ENCODE measurements at regions of chr3 and their contacts with region 1.

Region 1: DNA sequence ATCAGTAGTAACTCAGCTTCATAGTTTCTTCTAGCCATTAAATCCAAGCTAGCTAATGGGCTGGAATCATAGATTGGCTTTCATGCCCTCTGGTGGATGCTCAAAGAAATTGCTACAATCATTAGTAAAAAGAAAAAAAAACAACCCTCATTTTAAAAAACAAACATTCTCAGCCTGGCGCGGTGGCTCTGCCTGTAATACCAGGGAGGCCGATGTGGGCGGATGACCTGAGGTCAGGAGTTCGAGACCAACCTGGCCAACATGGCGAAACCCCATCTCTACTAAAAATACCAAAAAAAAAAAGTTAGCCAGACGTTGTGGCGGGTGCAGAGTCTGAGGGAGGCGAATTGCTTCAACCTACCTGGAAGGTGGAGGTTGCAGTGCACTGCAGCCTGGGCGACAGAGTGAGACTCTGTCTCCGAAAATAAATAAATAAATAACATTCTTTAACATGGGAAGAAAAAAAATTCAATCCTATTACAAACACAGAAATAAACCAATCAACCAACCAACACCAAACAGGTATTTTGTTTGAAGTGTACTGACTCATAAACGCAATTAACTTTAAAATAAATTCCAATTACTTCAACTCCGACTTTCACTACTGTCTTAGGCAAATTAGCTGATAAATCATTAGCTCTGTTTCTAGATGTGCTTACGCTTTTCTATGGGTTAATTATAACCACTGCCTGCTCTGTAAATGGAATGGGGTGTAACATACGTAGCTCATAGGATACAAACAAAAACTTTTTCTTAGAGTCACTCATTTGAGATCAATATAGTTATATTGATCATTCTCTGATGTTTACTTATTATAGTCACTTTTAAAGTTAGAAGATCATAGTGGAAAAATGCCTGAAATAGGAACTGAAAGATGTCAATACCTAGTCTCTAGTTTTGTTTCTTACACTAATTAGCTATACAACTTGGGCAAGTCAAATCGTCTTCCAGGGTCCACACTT is 24.9 kb downstream of the TMEM207 start:
- DNase-seq: no peak
- H3K4me3 ChIP-seq: no peak overlapping the region
- CTCF ChIP-seq: peak; percentile 54

Region 2: GRCh38 chr3:190217081-190217480 is 207.7 kb before region 1 on chr3:
- CTCF ChIA-PET with region 1: interaction called, 154 read pairs
- POLR2A ChIA-PET with region 1: no interaction called
- DNase-seq: no peak
- H3K4me3 ChIP-seq: no peak overlapping the region
- CTCF ChIP-seq: no peak

Region 3: DNA sequence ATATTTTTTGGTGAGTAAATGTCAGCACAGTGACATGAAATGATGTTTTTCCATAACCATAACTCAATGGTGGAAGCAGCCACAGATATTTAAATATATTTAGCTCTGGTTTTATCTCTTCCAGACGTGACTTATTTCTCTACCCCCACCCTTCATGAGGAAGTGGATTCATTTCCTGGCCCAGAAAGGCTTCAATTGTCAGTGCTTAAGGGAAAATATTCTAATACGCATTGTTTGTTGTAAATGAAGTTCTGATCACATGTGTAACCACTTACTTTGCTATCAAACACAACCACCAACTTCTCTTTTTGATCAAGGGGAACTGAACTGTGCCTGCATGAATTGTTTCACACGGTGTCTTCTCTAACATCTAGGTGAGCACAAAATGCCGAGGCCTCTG is 22.8 kb before region 1 on chr3:
- CTCF ChIA-PET with region 1: interaction called, 11 read pairs
- POLR2A ChIA-PET with region 1: no interaction called
- DNase-seq: no peak
- H3K4me3 ChIP-seq: no peak overlapping the region
- CTCF ChIP-seq: no peak

Region 4: GRCh38 chr3:190414297-190414696 is 10.5 kb before region 1 on chr3:
- CTCF ChIA-PET with region 1: interaction called, 43 read pairs
- POLR2A ChIA-PET with region 1: no interaction called
- DNase-seq: no peak
- H3K4me3 ChIP-seq: no peak overlapping the region
- CTCF ChIP-seq: no peak

Region 5: DNA sequence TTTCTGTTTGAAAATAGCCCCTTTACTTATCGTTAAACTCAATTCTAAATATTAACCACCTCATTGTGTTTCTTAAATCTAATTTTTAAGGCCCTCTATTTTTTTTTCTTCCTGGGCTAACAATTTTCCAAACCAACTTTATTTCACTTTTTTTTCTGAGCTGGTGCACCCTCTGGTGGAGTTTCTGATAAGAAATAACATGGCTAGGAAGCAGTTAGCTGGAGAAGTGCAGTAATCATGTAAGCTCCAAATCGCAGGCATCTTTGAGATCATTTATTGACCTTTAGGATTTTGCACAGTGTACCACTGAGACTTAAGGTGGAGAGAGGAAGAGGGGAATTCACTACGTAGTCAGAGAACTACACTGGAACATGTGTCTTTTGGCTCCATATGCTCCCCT is 18.5 kb after region 1 on chr3:
- CTCF ChIA-PET with region 1: interaction called, 36 read pairs
- POLR2A ChIA-PET with region 1: no interaction called
- DNase-seq: no peak
- H3K4me3 ChIP-seq: no peak overlapping the region
- CTCF ChIP-seq: peak; percentile 32

Measured in AG04449 (cell line).